ENCODE measurements at regions of chr5 and their contacts with region 1.

Region 1: DNA sequence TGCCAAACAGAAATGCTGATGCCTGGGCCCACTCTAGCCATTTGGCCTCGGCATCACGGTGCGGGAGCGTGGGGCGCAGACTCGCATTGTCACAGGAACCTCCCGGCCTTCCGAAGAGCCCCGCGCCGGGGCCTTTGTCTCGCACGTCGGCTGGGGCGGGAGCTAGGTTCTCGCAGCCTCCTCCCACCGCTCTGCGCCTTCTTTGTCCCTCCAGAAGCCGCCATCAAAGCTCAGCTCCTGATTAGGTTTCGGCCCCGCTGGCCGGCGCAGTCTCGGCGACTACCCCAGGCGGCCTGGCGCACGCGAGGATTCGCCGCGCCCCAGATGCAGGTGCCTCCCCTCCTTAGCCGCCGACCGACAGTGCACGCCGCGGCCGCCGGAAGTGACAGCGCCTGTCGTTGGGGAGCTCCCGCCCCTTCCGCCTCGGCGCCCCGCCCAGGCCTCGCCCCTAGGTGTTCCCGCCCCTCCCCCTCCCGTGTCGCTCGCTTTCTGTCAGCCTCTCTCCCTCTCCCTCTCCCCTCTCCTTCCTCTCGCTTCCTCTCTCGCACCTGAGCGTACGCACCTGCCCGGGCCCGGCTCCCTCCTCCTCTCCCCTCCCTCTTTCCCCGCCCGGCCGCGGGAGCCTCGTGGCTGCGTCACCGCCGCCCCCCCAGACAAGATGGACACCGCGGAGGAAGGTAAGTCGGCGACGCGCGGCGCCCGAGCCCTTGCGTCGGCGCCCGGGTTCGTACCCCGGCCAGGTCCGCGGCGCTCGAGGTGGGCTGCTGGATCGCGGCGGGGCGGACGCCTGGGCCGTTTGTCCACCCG is at the start of gene MARCHF6:
- DNase-seq: peak; percentile 98
- ATAC-seq: peak; percentile 81
- H3K4me3 Mint-ChIP-seq: peak within 1 kb of the TSS; percentile 97
- H3K27ac Mint-ChIP-seq: peak within 1 kb of the TSS; percentile 99
- H3K4me1 Mint-ChIP-seq: peaks cover 39% of the 10 kb centered on the region
- H3K27me3 Mint-ChIP-seq: no peaks in the 10 kb centered on the region
- total RNA-seq, gene MARCHF6: 67.3 to 92.2 TPM

Region 2: DNA sequence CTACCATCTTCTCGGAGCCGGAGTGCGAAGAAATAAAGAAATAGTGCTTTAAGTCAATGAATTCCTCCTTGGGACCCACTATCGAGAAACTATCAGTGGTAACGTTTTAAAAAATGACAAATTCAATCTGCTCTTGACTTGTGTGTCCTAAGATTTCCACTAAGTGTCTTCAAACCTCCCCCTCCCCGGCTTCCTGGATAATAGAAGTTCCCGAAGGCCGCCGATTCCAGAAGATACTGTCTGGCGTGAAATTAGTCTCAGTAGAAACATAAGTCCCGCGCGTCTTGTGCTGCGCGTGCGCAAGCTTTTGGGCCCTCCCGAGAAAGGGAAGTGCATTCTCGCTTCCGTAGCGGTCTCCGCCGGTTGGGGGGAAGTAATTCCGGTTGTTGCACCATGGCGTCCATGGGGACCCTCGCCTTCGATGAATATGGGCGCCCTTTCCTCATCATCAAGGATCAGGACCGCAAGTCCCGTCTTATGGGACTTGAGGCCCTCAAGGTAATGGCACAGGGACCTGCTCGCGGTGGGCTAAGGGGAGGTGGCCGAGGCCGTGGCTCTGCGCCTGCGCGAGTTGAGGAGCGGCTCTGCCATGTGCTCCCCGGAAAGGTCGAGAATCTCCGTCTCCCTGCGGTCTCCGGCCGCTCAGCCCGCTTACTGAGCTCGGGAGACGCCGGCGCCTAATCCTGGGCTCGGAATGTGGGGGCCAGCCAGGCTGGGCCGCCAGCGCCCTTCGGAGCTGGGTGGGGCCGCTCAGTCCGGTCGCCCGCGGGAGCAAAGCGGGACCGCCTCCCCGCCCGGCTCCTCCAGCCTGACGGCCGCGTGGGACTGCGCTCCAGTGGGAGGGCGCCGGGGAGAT is 103.3 kb before region 1 on chr5 and contains the start of gene CCT5:
- CTCF ChIA-PET with region 1: no interaction called
- POLR2A ChIA-PET with region 1: interaction called, 11 read pairs
- intact Hi-C with region 1: loop called (anchors 1 to 2 kb)
- DNase-seq: peak; percentile 93
- ATAC-seq: peak; percentile 82
- H3K4me3 Mint-ChIP-seq: peak within 1 kb of the TSS; percentile 92
- H3K27ac Mint-ChIP-seq: peak within 1 kb of the TSS; percentile 100
- H3K4me1 Mint-ChIP-seq: peaks cover 47% of the 10 kb centered on the region
- H3K27me3 Mint-ChIP-seq: no peaks in the 10 kb centered on the region
- total RNA-seq, gene CCT5: 347 to 461 TPM

Region 3: GRCh38 chr5:10418654-10419345 is 65.4 kb after region 1 on chr5:
- CTCF ChIA-PET with region 1: interaction called, 9 read pairs
- POLR2A ChIA-PET with region 1: interaction called, 10 read pairs
- intact Hi-C with region 1: loop called (anchors 1 kb)
- DNase-seq: peak; percentile 19
- ATAC-seq: peak; percentile 90
- H3K4me3 Mint-ChIP-seq: no peak overlapping the region
- H3K27ac Mint-ChIP-seq: no peak overlapping the region
- H3K4me1 Mint-ChIP-seq: peaks cover 53% of the 10 kb centered on the region
- H3K27me3 Mint-ChIP-seq: no peaks in the 10 kb centered on the region

Region 4: DNA sequence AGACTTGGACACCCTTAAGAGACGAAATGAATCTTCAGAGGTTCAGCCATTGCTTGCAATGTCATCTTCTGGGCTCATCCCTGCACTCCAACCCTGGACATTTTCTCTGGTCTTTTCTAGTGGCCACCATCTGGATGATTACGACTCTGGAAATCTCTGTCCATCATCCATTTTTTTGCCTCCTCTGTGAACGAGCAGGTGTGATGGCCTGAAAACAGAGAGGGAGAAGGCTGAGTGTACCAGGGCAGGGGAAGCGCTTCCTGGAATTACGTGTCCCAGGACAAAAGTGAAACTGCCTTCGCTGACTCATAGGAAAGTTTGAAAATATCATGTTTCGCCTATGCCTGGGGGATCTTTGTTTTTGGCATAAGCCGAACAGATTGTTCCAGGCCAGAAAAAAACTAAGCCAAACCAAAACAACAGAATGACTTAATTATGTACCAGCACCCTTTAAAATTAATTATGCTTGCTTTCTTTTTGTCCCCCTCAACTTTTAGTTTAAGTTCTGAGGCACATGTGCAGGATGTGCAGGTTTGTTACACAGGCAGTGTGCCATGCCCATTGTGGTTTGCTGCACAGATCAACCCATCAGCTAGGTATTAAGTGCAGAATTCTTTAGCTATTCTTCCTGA is 242.3 kb after region 1 on chr5:
- CTCF ChIA-PET with region 1: no interaction called
- POLR2A ChIA-PET with region 1: no interaction called
- intact Hi-C with region 1: loop called in 1 of 2 experiments (anchors 10 kb)
- DNase-seq: peak; percentile 71
- ATAC-seq: peak; percentile 87
- H3K4me3 Mint-ChIP-seq: no peak overlapping the region
- H3K27ac Mint-ChIP-seq: no peak overlapping the region
- H3K4me1 Mint-ChIP-seq: peaks cover 40% of the 10 kb centered on the region
- H3K27me3 Mint-ChIP-seq: peaks cover 14% of the 10 kb centered on the region

Region 5: GRCh38 chr5:10761166-10761932 is 407.9 kb after region 1 on chr5 and contains the start of gene DAP:
- CTCF ChIA-PET with region 1: no interaction called
- POLR2A ChIA-PET with region 1: no interaction called
- intact Hi-C with region 1: loop called in 1 of 2 experiments (anchors 1 kb)
- DNase-seq: peak; percentile 92
- ATAC-seq: peak; percentile 82
- H3K4me3 Mint-ChIP-seq: peak within 1 kb of the TSS; percentile 83
- H3K27ac Mint-ChIP-seq: peak within 1 kb of the TSS; percentile 90
- H3K4me1 Mint-ChIP-seq: peaks cover 49% of the 10 kb centered on the region
- H3K27me3 Mint-ChIP-seq: peaks cover 3% of the 10 kb centered on the region
- total RNA-seq, gene DAP: 41.4 to 44.0 TPM

Measured in activated CD4-positive, alpha-beta T cell treated with anti-CD3 and anti-CD28 coated beads for 36 hours (primary cell).